Activated T-helper 1 cell treated with anti-CD3 and anti-CD28 coated beads, Interleukin-12 subunit alpha, Interleukin-12 subunit beta, Interleukin-2, Interleukin-4 antibody, amounts not matched to agents 30 ng/mL and 10 ng/mL and 1 ng/mL, durations not matched to agents 14 hours and 24 hours and 36 hours (primary cell): ENCODE measurements at regions of chr19 and their contacts with region 1.

Region 1: GRCh38 chr19:48445606-48446481 is at the start of gene GRWD1:
- DNase-seq: peak; percentile 92
- H3K4me3 Mint-ChIP-seq: peak within 1 kb of the TSS; percentile 92
- H3K27ac Mint-ChIP-seq: peak within 1 kb of the TSS; percentile 90
- H3K4me1 Mint-ChIP-seq: peaks cover 19% of the 10 kb centered on the region
- H3K27me3 Mint-ChIP-seq: peaks cover 25% of the 10 kb centered on the region
- total RNA-seq, gene GRWD1: 96.0 and 100 TPM in 2 replicates

Region 2: DNA sequence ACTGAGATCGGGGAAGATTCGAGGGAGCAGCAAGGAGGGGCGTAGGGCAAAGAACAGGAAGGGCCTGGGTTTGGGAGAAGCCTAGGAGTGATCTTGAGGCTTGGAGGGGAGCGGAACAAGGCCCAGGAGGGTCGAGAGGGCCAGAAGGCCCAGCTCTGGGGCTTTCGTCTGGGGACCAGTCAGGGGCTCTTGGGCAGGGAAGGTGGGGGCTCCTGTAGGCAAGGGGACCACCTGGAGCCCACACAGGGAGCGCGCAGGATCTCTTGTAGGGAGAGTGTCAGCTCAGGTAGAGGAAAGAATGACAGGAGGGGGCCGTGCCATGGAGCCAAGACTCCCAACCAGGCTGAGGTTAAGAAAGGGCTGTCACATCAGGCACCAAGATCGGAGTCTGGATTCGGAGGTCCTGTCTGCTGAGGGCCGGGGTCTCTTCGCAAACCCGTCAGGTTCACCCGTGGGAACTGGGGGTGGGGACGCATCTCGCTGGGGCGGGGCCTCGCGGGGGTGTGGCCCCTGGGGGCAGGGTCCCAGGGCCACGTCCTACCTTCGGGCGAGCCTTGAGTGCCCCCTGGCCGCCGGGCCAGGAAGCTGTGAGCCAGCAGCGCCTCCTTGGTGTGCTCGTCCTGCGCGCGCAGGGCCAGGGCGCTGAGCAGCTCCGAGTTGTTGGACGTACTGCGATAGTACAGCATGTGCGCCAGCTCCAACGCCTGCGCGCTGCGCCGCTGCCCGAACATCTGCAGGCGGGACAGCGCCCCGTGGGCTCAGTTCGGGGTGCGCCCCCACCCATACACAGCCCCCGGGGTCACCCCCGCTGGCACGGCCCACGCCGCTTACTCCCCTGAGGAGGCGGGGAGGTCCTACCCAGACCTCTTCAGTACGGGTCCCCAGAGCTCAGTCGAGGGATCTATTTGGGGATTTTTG is 112.1 kb before region 1 on chr19:
- intact Hi-C with region 1: loop called (anchors 1 kb)
- DNase-seq: peak; percentile 92
- H3K4me3 Mint-ChIP-seq: peak overlapping the region; percentile 95
- H3K27ac Mint-ChIP-seq: peak overlapping the region; percentile 97
- H3K4me1 Mint-ChIP-seq: peaks cover 55% of the 10 kb centered on the region
- H3K27me3 Mint-ChIP-seq: peaks cover 1% of the 10 kb centered on the region

Region 3: GRCh38 chr19:48398375-48399235 is 47.2 kb before region 1 on chr19:
- intact Hi-C with region 1: loop called (anchors 2 kb)
- DNase-seq: peak; percentile 84
- H3K4me3 Mint-ChIP-seq: peak overlapping the region; percentile 53
- H3K27ac Mint-ChIP-seq: peak overlapping the region; percentile 34
- H3K4me1 Mint-ChIP-seq: peaks cover 31% of the 10 kb centered on the region
- H3K27me3 Mint-ChIP-seq: peaks cover 39% of the 10 kb centered on the region

Region 4: DNA sequence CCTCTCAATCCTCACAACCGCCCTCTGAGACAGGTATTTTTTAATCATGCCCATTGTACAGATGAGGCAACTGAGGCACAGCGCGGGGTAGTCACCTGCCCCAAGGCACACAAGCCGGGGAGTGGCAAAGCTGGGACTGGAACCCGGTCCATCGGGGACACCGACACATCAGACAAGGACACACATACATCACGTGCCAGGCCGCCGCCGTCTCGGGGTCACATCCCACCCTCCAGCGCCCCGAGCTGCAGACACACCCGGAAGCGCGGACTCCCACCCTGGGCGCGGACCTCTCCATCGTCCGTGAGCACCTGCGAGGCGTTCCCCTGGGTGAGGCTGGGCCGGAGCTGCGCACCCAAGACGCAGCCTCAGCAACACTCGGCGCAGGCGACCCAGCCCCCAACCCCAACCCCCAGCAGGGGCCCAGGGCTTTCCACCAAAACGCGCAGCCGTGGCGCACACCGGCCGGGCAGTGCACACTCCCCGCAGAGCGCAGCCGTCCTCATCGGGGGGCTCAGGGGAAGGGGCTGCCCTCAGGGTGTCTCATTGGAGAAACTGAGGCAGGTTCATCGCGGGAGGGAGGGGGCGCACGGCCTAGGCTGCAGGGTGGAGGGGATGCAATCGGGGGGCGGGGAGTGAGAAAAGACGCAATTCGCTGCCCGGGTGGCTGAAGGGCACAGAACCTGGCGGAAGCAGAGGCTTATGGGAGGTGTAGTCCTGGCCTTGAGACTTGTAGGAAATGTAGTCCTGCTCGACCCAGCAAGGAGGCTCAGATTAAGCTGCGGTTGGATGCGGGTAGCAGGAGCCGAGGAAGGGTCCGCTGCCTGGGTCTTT is 67.7 kb after region 1 on chr19:
- intact Hi-C with region 1: loop called (anchors 1 kb)
- DNase-seq: peak; percentile 64
- H3K4me3 Mint-ChIP-seq: no peak overlapping the region
- H3K27ac Mint-ChIP-seq: peak overlapping the region; percentile 46
- H3K4me1 Mint-ChIP-seq: peaks cover 14% of the 10 kb centered on the region
- H3K27me3 Mint-ChIP-seq: peaks cover 3% of the 10 kb centered on the region

Region 5: DNA sequence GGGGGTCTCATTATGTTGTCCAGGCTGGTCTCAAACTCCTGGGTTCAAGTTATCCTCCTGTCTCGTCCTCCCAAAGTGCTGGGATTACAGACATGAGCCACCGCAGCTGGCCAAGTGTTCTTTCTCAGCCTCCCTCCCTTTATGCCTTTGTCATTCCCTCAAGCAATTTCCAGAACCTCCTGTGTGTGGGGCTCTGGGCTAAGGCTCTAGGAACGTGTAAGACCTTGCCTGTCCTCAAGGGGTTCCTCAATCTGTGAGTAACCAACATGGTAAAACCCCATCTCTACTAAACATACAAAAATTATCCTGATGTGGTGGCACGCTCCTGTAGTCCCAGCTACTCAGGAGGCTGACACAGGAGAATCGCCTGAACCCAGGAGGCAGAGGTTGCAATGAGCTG is 145.2 kb after region 1 on chr19:
- intact Hi-C with region 1: no loop called
- DNase-seq: no peak
- H3K4me3 Mint-ChIP-seq: no peak overlapping the region
- H3K27ac Mint-ChIP-seq: no peak overlapping the region
- H3K4me1 Mint-ChIP-seq: peaks cover 10% of the 10 kb centered on the region
- H3K27me3 Mint-ChIP-seq: no peaks in the 10 kb centered on the region

Region 6: DNA sequence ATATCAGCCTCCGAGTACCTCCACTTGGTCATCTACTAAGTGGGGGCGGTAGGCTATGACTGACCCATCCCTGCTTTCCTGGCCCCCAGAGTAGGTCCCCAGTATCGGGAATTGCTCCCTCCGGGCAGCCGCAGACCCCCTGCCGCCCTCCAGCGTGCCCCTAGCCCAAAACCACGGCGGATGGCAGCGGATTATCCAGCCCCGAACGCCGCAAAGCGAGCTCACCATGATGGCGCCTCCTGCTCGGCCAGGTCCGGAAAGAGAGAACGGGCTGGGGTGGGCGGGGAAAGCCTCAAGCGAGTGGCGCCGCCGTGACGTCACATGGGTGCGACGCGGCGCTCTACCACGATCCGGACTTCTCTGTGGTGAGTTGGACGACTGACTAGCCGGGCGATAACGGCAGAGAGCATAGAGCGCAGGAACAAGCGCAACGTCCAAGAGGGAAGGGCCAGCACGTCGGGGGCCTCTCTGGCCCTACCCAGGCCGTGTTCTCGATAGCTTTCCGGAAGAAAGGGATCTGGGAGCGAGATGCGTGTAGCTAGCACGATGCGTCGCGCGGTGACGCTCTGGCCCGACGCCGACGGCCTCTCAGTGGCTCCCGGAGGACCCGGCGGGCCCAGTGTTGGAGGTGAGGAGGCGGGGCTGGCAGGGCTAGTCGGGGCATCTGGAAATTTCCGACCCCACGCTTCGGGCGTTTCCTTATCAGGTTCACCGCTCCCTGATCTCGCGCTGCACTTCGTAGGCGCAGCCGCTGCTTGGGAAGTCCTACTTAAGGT is 173.3 kb after region 1 on chr19 and contains the starts of genes RPL18 and SPHK2:
- intact Hi-C with region 1: loop called (anchors 1 kb)
- DNase-seq: peak; percentile 94
- H3K4me3 Mint-ChIP-seq: peak within 1 kb of the TSS; percentile 99
- H3K27ac Mint-ChIP-seq: peak within 1 kb of the TSS; percentile 100
- H3K4me1 Mint-ChIP-seq: peaks cover 50% of the 10 kb centered on the region
- H3K27me3 Mint-ChIP-seq: no peaks in the 10 kb centered on the region
- total RNA-seq, gene RPL18: 1,774 and 1,780 TPM in 2 replicates
- total RNA-seq, gene SPHK2: 40.8 and 44.1 TPM in 2 replicates